Adrenal gland (tissue), 19 donors: ENCODE measurements at regions of chr19 and their contacts with region 1.

Region 1: DNA sequence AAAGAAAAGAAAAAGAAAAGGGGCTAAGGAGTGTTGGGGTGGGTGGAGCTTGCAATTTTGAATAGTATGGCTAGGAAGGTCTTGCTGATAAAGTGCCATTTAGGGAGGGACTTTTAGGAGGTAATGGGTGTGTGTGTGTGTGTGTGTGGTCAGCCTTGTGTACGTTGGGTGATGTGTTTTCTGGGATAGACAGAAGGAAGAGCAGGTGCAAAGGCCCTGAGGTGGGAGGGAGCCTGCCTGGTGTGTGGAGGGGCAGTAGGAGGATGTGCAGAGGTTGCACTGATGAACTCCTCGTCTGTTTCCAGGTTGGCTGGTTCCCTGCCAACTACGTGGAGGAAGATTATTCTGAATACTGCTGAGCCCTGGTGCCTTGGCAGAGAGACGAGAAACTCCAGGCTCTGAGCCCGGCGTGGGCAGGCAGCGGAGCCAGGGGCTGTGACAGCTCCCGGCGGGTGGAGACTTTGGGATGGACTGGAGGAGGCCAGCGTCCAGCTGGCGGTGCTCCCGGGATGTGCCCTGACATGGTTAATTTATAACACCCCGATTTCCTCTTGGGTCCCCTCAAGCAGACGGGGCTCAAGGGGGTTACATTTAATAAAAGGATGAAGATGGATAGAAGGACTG is 30.5 kb upstream of the ADGRE1 start:
- DNase-seq: peak in 1 of 7 donors; percentile 23
- H3K4me3 ChIP-seq: no peak overlapping the region
- H3K27ac ChIP-seq: no peak overlapping the region
- H3K4me1 ChIP-seq: no peaks in the 10 kb centered on the region
- H3K27me3 ChIP-seq: no peaks in the 10 kb centered on the region
- CTCF ChIP-seq: no peak
- POLR2A ChIP-seq: no peak

Region 2: DNA sequence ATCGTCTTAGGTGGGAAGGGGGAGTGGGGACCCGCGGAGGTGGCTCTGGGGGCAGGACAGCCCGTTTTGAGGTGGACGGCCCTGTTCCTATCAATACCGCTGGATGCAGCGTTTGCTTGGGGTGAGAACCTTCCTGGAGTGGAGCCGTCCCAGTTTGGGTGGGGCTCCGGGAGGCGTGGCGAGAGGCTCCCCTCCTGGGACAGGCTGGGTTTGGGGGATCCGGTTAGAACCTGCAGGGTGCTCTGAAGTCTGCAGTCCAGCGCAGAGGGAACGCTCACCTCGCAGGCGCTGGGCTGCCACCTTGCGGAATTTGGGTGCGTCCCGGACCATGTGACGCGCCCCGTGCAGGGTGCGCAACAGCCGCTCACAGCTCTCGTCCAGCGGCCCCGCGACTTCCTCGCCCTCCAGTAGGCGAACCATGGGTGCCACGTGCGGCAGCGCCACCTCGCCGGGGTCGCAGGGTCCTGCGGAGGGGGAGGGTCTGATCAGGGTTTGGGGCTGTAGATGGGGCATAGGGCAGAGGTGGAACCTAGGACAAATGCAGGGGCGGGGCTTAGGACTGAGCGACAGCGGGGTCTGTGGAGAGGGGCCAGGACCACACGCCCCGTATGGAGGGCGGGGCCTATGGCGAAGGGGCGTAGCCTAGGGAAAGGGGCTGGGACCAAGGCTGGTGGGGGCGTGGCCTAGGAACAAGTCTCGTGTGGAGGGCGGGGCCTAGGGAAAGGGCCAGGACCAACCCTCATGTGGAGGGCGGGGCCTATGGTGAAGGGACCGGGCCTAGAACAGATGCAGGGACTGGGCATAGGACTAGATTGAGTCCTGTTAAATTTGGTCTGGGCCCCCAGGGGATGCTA is 103.5 kb before region 1 on chr19:
- intact Hi-C with region 1: loop called (anchors 10 kb)
- DNase-seq: peak; percentile 77 to 93 (median 88)
- H3K4me3 ChIP-seq: peak overlapping the region in 2 of 4 donors; percentile 46 to 53
- H3K27ac ChIP-seq: peak overlapping the region in 3 of 5 donors; percentile 14 to 85 (median 47)
- H3K4me1 ChIP-seq: peaks cover 6 to 9% of the 10 kb centered on the region in 2 donors
- H3K27me3 ChIP-seq: no peaks in the 10 kb centered on the region
- CTCF ChIP-seq: peak; percentile 20 to 63 (median 48)
- POLR2A ChIP-seq: peak in 1 of 2 donors; percentile 37